ENCODE measurements at regions of chr7 and their contacts with region 1.

Region 1: GRCh38 chr7:75639071-75639885 is 99.5 kb downstream of the HIP1 start:
- DNase-seq: no peak
- H3K4me3 ChIP-seq: peak overlapping the region; percentile 69
- CTCF ChIP-seq: no peak

Region 2: GRCh38 chr7:75546237-75547015 is 92.9 kb before region 1 on chr7:
- in situ Hi-C with region 1: no loop called
- DNase-seq: no peak
- H3K4me3 ChIP-seq: no peak overlapping the region
- CTCF ChIP-seq: no peak

Region 3: GRCh38 chr7:75599244-75599781 is 40.0 kb before region 1 on chr7:
- in situ Hi-C with region 1: loop called (anchors 5 kb)
- DNase-seq: no peak
- H3K4me3 ChIP-seq: no peak overlapping the region
- CTCF ChIP-seq: no peak

Region 4: GRCh38 chr7:75727881-75728592 is 88.8 kb after region 1 on chr7:
- in situ Hi-C with region 1: no loop called
- DNase-seq: no peak
- H3K4me3 ChIP-seq: no peak overlapping the region
- CTCF ChIP-seq: no peak

Measured in astrocyte of the cerebellum (primary cell).